ENCODE measurements at regions of chr12 and their contacts with region 1.

Region 1: GRCh38 chr12:67943226-67943892 is 45.9 kb upstream of the IFNG-AS1 start:
- DNase-seq: peak; percentile 41
- H3K4me3 ChIP-seq: no peak overlapping the region
- H3K27me3 ChIP-seq: no peaks in the 10 kb centered on the region
- CTCF ChIP-seq: peak; percentile 69

Region 2: GRCh38 chr12:67827820-67828383 is 115.5 kb before region 1 on chr12:
- CTCF ChIA-PET with region 1: no interaction called
- POLR2A ChIA-PET with region 1: no interaction called
- DNase-seq: peak; percentile 87
- H3K4me3 ChIP-seq: peak overlapping the region; percentile 43
- H3K27me3 ChIP-seq: no peaks in the 10 kb centered on the region
- CTCF ChIP-seq: no peak

Region 3: GRCh38 chr12:67928621-67929388 is 14.6 kb before region 1 on chr12:
- CTCF ChIA-PET with region 1: interaction called, 17 read pairs
- POLR2A ChIA-PET with region 1: no interaction called
- DNase-seq: no peak
- H3K4me3 ChIP-seq: no peak overlapping the region
- H3K27me3 ChIP-seq: no peaks in the 10 kb centered on the region
- CTCF ChIP-seq: no peak